Gastrocnemius medialis (tissue), 4 donors: ENCODE measurements at regions of chr11 and their contacts with region 1.

Region 1: GRCh38 chr11:7986768-7987559 is at the start of gene EIF3F:
- DNase-seq: peak; percentile 93
- ATAC-seq: peak; percentile 100
- H3K4me3 ChIP-seq: peak within 1 kb of the TSS; percentile 79 to 85 (median 84)
- H3K27ac ChIP-seq: peak within 1 kb of the TSS; percentile 77 to 86 (median 78)
- H3K4me1 ChIP-seq: peaks cover 28% of the 10 kb centered on the region in 2 donors
- H3K27me3 ChIP-seq: no peaks in the 10 kb centered on the region
- CTCF ChIP-seq: peak; percentile 83 to 90 (median 86)
- POLR2A ChIP-seq: peak; percentile 18 to 40
- total RNA-seq, gene EIF3F: 187 to 303 (median 239) TPM

Region 2: GRCh38 chr11:7892840-7893254 is 94.1 kb before region 1 on chr11:
- in situ Hi-C with region 1: loop called in 1 of 4 experiments (anchors 5 kb)
- intact Hi-C with region 1: loop called (anchors 1 kb)
- DNase-seq: no peak
- ATAC-seq: peak; percentile 58 to 70
- H3K4me3 ChIP-seq: no peak overlapping the region
- H3K27ac ChIP-seq: no peak overlapping the region
- H3K4me1 ChIP-seq: no peaks in the 10 kb centered on the region
- H3K27me3 ChIP-seq: no peaks in the 10 kb centered on the region
- CTCF ChIP-seq: peak in 4 of 5 experiments; percentile 19 to 60 (median 49)
- POLR2A ChIP-seq: no peak

Region 3: GRCh38 chr11:8038393-8038792 is 51.4 kb after region 1 on chr11:
- in situ Hi-C with region 1: no loop called
- intact Hi-C with region 1: no loop called
- DNase-seq: no peak
- ATAC-seq: no peak
- H3K4me3 ChIP-seq: no peak overlapping the region
- H3K27ac ChIP-seq: no peak overlapping the region
- H3K4me1 ChIP-seq: no peaks in the 10 kb centered on the region
- H3K27me3 ChIP-seq: no peaks in the 10 kb centered on the region
- CTCF ChIP-seq: no peak
- POLR2A ChIP-seq: no peak